Heart left ventricle (tissue), 16 donors: ENCODE measurements at regions of chr12 and their contacts with region 1.

Region 1: DNA sequence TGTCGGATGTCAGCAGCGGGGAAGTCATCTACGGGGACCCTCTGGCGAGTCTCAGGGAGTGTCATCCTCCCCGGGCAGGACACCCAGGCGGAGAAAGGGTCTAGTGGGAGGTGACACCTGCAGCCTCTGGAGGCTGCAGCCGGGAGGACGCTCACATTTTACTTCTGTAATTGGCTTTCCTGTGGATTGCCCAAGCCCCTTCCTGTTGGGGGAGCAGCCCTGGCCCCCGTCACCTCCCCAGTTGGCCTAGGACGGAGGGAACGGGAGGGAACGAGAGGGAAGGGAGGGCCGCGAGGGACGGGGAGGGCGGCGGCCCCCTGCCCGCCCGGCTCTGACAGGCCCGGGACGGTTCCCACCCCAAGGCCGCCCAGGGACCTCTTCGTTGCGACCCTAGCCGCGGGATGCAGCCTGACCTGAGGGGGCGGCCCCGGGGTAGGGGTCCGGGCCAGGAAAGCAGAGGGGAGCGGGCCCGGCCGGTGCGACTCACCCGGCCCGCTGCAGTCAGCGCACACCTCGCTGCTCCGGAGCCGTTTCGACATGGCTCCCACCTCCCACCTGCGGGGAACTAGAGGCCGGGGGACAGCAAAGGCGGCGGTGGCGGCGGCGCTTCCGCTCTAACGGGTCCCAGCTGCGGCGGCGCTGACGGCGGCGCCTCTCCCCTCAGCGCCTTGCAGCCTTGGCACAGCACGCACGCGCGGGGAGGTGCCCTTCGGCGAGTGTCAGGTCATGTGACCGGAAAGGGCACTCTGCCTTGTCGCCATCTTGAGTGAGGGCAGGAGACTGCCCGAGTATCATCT is at the start of gene GIT2:
- DNase-seq: peak; percentile 94 to 98 (median 96)
- ATAC-seq: peak; percentile 86 to 92 (median 90)
- H3K4me3 ChIP-seq: peak within 1 kb of the TSS; percentile 82 to 100 (median 92)
- H3K27ac ChIP-seq: peak within 1 kb of the TSS; percentile 80 to 99 (median 90)
- H3K4me1 ChIP-seq: peaks cover 0 to 65% (median 28%) of the 10 kb centered on the region in 12 donors
- H3K27me3 ChIP-seq: no peaks in the 10 kb centered on the region
- CTCF ChIP-seq: no peak
- POLR2A ChIP-seq: peak in 1 of 2 donors; percentile 89
- total RNA-seq, gene GIT2: 28.5 to 56.7 (median 41.7) TPM

Region 2: DNA sequence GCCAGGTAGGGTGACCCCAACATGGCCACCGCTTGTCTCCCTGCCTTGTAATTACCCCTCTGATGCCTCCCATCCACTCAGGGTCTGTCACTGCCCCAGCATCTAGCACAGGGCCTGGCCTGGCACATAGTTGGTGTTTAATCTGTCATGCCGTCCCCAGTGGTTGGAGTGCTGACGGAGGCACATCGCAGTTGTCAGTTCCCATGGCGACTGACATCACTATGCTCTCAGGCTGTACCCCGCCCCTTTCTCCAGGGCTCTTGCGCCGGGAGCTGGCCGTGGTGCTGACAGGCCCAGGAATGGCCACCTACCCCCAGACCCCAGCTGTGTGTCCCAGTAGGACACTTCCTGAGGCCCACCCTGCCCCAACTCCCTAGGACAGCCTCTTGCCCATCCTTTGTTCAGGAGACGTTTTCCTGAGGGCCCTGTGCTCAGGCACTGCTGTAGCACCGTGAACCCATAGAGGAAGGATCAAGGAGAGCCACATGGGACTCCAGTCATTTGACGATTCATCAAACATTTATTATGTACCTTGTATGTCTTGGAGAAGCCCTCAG is 259.3 kb before region 1 on chr12:
- intact Hi-C with region 1: no loop called
- DNase-seq: peak; percentile 18 to 59 (median 30)
- ATAC-seq: peak; percentile 29 to 70 (median 64)
- H3K4me3 ChIP-seq: no peak overlapping the region
- H3K27ac ChIP-seq: no peak overlapping the region
- H3K4me1 ChIP-seq: peaks cover 0 to 26% (median 6%) of the 10 kb centered on the region in 12 donors
- H3K27me3 ChIP-seq: peaks cover 0 to 6% (median 0%) of the 10 kb centered on the region in 9 donors
- CTCF ChIP-seq: no peak
- POLR2A ChIP-seq: no peak

Region 3: GRCh38 chr12:109944561-109945359 is 51.1 kb before region 1 on chr12:
- intact Hi-C with region 1: loop called in 3 of 10 experiments (anchors 5 kb)
- DNase-seq: peak in 4 of 5 donors; percentile 35 to 46 (median 39)
- ATAC-seq: peak; percentile 35 to 80 (median 74)
- H3K4me3 ChIP-seq: no peak overlapping the region
- H3K27ac ChIP-seq: peak overlapping the region in 9 of 12 donors; percentile 15 to 55 (median 35)
- H3K4me1 ChIP-seq: peaks cover 0 to 56% (median 46%) of the 10 kb centered on the region in 12 donors
- H3K27me3 ChIP-seq: no peaks in the 10 kb centered on the region
- CTCF ChIP-seq: peak in 1 of 12 donors; percentile 28
- POLR2A ChIP-seq: no peak

Region 4: GRCh38 chr12:109963743-109964429 is 32.0 kb before region 1 on chr12:
- intact Hi-C with region 1: loop called in 1 of 10 experiments (anchors 5 kb)
- DNase-seq: peak in 1 of 5 donors; percentile 34
- ATAC-seq: peak; percentile 50 to 84 (median 71)
- H3K4me3 ChIP-seq: no peak overlapping the region
- H3K27ac ChIP-seq: peak overlapping the region in 5 of 12 donors; percentile 5 to 48 (median 27)
- H3K4me1 ChIP-seq: peaks cover 0 to 28% (median 8%) of the 10 kb centered on the region in 12 donors
- H3K27me3 ChIP-seq: no peaks in the 10 kb centered on the region
- CTCF ChIP-seq: no peak
- POLR2A ChIP-seq: no peak

Region 5: GRCh38 chr12:110048242-110049027 is 52.6 kb after region 1 on chr12 and contains the start of gene C12orf76:
- intact Hi-C with region 1: loop called in 1 of 10 experiments (anchors 5 kb)
- DNase-seq: peak; percentile 94 to 96 (median 96)
- ATAC-seq: peak; percentile 95 to 99 (median 98)
- H3K4me3 ChIP-seq: peak within 1 kb of the TSS; percentile 59 to 99 (median 84)
- H3K27ac ChIP-seq: peak within 1 kb of the TSS in 11 of 12 donors; percentile 33 to 87 (median 72)
- H3K4me1 ChIP-seq: peaks cover 0 to 30% (median 16%) of the 10 kb centered on the region in 12 donors
- H3K27me3 ChIP-seq: no peaks in the 10 kb centered on the region
- CTCF ChIP-seq: peak in 1 of 12 donors; percentile 5
- POLR2A ChIP-seq: peak in 1 of 2 donors; percentile 62
- total RNA-seq, gene C12orf76: 3.5 to 13.3 (median 4.7) TPM

Region 6: DNA sequence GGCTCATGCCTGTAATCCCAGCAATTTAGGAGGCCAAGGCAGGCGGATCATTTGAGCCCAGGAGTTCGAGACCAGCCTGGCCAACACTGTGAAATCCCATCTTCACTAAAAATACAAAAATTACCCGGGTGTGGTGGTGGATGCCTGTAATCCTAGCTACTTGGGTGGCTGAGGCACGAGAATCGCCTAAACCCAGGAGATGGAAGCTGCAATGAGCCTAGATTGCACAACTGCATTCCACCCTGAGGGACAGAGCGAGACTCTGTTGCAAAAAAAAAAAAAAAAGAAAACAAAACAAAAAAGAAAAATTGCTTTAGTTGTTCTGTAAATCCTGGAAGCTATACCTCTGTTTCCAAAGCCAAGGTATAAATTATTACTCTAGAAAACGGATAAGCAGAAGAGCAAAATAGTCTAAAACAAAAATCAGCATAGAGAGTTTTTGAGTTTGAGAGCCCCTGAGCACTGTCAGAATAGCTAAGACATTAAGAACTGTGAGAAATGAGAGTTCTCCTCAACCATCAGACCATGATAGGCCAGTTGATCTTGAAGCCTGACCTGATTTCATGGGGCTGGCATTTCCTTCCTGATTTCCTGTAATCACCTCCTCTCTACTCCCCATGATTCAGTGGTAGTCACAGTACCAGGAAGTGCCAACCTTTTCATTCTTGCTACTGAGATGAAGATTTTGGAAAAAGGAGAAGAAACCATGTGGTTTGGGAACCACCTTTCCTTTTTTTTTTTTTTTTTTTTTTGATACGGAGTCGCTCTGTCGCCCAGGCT is 316.9 kb after region 1 on chr12:
- intact Hi-C with region 1: no loop called
- DNase-seq: no peak
- ATAC-seq: peak in 1 of 4 donors; percentile 18
- H3K4me3 ChIP-seq: no peak overlapping the region
- H3K27ac ChIP-seq: peak overlapping the region in 6 of 12 donors; percentile 4 to 72 (median 24)
- H3K4me1 ChIP-seq: peaks cover 2 to 94% (median 53%) of the 10 kb centered on the region in 12 donors
- H3K27me3 ChIP-seq: no peaks in the 10 kb centered on the region
- CTCF ChIP-seq: no peak
- POLR2A ChIP-seq: no peak

Region 7: DNA sequence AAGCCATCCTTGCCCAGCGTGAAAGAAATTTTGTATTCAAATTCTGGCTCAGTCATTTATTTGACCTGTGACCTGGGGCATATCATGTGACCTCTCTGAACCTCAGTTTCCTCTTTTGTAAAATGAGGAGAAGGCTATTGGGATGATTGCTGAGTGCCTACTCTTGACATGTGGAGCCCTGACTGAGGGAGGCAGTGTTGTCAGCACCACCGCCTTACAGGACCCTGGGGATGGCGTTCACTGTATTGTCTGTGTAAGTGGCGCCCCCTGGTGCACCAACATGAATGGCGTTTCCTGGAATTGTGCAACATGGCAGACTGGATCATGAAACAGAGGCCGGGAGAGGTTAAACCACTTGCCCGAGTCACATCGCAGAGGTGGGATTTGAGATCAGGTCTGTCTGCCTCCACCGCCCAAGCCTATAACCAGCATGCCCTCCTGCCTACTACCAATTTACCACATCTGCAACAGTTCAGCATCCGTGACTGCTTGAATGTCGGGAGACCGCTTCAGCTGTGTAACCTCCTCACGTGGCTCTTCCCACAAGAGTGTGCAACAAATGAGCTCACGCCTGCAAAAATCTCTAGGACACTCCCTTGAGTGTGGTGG is 830.8 kb after region 1 on chr12:
- intact Hi-C with region 1: no loop called
- DNase-seq: peak; percentile 81 to 92 (median 84)
- ATAC-seq: peak; percentile 70 to 97 (median 95)
- H3K4me3 ChIP-seq: peak overlapping the region in 9 of 12 donors; percentile 13 to 47 (median 28)
- H3K27ac ChIP-seq: no peak overlapping the region
- H3K4me1 ChIP-seq: peaks cover 0 to 13% (median under 1%) of the 10 kb centered on the region in 12 donors
- H3K27me3 ChIP-seq: no peaks in the 10 kb centered on the region
- CTCF ChIP-seq: peak; percentile 67 to 86 (median 80)
- POLR2A ChIP-seq: no peak